RWPE1 (cell line): ENCODE measurements at regions of chr5 and their contacts with region 1.

Region 1: GRCh38 chr5:142748568-142749249 is 21.5 kb upstream of the ARHGAP26 start:
- DNase-seq: peak; percentile 51
- H3K27ac ChIP-seq: no peak overlapping the region
- CTCF ChIP-seq: no peak; the same call in 1 of the 2 replicates

Region 2: DNA sequence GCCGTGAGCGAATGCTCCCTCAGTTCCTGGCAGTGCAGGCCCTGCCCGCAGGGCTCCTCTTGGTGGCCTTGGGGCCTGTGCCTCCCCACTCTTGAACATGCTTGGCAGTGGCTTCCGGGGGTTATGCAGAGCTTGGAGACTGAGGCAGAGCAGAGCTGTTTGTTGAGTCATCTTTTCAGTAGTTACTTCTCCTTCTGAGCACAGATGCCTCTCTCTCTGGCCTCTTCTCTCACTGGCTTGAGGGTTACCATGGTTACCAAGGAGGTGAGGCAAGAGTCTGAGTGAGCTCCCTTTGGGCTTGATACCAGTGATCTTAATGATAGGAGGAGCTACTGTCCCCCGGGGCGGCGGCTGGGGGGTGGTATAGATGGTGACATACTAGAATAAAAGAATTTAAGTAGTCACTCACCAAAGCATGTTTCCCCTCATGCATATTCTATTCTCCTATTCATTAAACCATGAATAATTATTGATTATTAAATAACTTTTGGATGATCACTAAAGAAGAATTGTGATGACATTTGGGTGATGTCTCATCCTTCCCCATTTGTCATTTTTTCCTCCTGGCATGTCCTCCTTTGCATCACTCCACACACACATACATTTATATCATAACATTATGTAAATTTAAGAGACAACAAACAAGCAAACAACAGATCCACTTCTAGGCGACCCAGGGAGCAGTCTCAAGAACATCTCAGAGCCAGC is 132.5 kb after region 1 on chr5:
- CTCF ChIA-PET with region 1: interaction called, 53 read pairs
- POLR2A ChIA-PET with region 1: no interaction called
- DNase-seq: no peak
- H3K27ac ChIP-seq: no peak overlapping the region
- CTCF ChIP-seq: no peak